Caco-2 (cell line): ENCODE measurements at regions of chr17 and their contacts with region 1.

Region 1: DNA sequence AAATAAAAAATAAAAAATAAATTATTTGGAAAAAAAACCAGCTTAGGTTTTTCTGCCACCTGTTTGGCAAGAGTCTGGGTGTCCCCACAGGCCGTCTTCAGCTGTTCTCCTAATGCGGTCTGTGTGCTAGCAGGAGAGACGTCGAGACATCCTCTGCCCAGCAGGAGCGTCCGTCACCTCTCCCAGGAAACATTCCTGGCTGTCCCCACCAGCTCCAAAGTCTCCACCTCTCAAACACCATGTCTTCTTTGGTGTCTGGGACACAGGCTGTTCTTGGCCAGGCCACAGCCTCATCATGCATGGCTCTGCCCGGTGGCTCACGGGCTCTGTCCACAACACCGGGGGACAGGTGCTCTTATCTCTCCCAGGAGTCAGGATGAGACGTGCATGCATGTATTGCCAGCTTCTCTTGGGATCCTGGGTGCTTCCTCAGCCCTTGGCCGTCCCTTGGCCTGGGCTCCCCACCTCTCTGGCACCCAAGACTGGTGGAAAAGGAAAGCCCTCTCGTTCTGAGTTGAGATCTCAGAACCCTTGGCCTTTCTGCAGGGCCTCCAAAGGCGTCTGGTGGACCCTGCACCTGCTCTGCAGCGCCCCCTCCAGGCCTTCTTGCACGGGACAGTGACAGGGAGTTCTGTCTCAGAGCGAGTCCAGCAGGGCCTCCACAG is 84.9 kb upstream of the CBX4 start:
- DNase-seq: peak; percentile 75 to 78
- H3K4me3 ChIP-seq: no peak overlapping the region
- H3K4me3 Mint-ChIP-seq: no peak overlapping the region
- H3K27ac Mint-ChIP-seq: peak overlapping the region; percentile 90
- H3K4me1 ChIP-seq: peaks cover 50% of the 10 kb centered on the region
- H3K4me1 Mint-ChIP-seq: peaks cover 36% of the 10 kb centered on the region
- H3K27me3 ChIP-seq: no peaks in the 10 kb centered on the region
- H3K27me3 Mint-ChIP-seq: no peaks in the 10 kb centered on the region
- CTCF ChIP-seq: peak; percentile 47 to 71

Region 2: GRCh38 chr17:79951361-79952264 is 27.5 kb after region 1 on chr17:
- CTCF ChIA-PET with region 1: interaction called, 5 read pairs
- POLR2A ChIA-PET with region 1: interaction called, 10 read pairs
- intact Hi-C with region 1: no loop called
- DNase-seq: peak; percentile 85 to 91
- H3K4me3 ChIP-seq: no peak overlapping the region
- H3K4me3 Mint-ChIP-seq: peak overlapping the region; percentile 52
- H3K27ac Mint-ChIP-seq: peak overlapping the region; percentile 69
- H3K4me1 ChIP-seq: peaks cover 54% of the 10 kb centered on the region
- H3K4me1 Mint-ChIP-seq: peaks cover 23% of the 10 kb centered on the region
- H3K27me3 ChIP-seq: no peaks in the 10 kb centered on the region
- H3K27me3 Mint-ChIP-seq: no peaks in the 10 kb centered on the region
- CTCF ChIP-seq: no peak

Region 3: DNA sequence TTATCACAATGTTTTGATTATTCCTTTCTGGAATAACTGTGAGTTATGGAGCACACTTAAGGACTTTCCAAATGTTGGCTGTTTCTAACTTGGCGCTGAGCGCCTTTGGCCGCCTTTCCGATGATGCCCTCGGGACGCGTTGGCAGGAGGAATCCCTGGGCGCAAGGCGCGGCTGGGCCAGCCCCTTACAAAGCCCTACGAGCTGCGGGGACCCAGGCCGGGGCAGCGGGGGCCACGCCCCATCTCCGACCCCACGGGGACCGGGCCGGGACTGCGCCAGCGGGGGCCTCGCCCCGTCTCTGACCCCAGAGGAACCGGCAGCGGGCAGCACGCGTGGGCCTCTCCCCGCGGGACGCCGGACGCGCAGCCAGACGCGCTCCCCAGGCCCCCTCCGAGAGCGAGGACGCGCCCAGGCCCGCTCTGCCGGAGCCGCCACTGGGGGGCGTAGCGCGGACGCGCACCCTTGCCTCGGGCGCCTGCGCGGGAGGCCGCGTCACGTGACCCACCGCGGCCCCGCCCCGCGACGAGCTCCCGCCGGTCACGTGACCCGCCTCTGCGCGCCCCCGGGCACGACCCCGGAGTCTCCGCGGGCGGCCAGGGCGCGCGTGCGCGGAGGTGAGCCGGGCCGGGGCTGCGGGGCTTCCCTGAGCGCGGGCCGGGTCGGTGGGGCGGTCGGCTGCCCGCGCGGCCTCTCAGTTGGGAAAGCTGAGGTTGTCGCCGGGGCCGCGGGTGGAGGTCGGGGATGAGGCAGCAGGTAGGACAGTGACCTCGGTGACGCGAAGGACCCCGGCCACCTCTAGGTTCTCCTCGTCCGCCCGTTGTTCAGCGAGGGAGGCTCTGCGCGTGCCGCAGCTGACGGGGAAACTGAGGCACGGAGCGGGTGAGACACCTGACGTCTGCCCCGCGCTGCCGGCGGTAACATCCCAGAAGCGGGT is 177.2 kb after region 1 on chr17 and contains the start of gene GAA:
- CTCF ChIA-PET with region 1: no interaction called
- POLR2A ChIA-PET with region 1: no interaction called
- intact Hi-C with region 1: loop called (anchors 10 kb)
- DNase-seq: peak; percentile 80 to 95
- H3K4me3 ChIP-seq: peak within 1 kb of the TSS; percentile 97
- H3K4me3 Mint-ChIP-seq: peak within 1 kb of the TSS; percentile 86
- H3K27ac Mint-ChIP-seq: peak within 1 kb of the TSS; percentile 81
- H3K4me1 ChIP-seq: peaks cover 9% of the 10 kb centered on the region
- H3K4me1 Mint-ChIP-seq: peaks cover 6% of the 10 kb centered on the region
- H3K27me3 ChIP-seq: no peaks in the 10 kb centered on the region; the same call in 1 of the 2 replicates
- H3K27me3 Mint-ChIP-seq: no peaks in the 10 kb centered on the region
- CTCF ChIP-seq: peak; percentile 64 to 94
- total RNA-seq, gene GAA: 42.4 and 44.6 TPM in 2 replicates